A673 (cell line): ENCODE measurements at regions of chr15 and their contacts with region 1.

Region 1: DNA sequence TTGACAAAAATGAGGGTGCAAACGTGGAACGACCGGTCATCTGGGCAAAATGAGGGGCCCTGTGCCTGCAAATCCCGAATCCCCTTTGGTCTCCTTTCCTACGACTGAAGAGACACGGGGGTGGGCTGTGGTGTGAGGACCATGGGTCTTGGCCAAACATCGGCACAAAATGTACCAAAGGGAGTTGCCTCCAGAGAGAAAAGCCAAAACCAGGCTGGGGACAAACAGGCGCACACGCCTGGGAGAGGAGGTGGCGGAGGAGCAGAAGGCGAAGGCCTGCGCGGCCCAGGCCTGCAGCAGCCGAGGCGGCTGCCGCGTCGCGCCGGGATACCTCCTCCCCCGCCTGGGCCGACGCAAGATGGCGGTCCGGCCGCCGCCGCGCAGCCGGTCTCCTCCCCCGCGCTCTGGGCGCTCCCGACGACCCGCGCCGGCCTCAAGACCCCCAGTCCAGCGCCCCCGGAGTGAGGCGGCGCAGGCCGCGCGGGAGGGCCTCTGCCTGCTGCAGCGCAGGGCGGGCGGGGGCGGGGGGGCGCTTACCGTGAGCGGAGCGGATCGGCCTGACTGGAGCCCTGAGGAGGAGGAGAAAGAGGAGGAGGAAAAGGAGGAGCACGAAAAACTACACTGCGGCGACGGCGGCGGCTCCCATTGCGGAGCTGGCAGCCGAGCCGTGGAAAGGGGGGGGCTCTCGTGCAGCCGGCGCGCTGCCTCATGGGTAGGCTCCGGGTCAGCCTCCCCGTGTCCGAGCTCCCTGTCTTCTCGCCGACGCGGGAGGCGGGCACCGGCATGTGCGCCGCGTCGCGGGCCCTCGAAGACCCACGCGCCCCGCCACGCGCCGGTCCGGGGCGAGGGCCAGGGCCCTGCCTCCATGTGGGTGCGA is at the start of gene ZNF280D:
- DNase-seq: peak; percentile 94
- H3K4me3 ChIP-seq: peak within 1 kb of the TSS; percentile 59
- H3K27ac ChIP-seq: peak within 1 kb of the TSS; percentile 94
- H3K4me1 ChIP-seq: peaks cover 37% of the 10 kb centered on the region
- H3K27me3 ChIP-seq: no peaks in the 10 kb centered on the region
- CTCF ChIP-seq: no peak
- total RNA-seq, gene ZNF280D: 42.9 and 44.1 TPM in 2 replicates

Region 2: DNA sequence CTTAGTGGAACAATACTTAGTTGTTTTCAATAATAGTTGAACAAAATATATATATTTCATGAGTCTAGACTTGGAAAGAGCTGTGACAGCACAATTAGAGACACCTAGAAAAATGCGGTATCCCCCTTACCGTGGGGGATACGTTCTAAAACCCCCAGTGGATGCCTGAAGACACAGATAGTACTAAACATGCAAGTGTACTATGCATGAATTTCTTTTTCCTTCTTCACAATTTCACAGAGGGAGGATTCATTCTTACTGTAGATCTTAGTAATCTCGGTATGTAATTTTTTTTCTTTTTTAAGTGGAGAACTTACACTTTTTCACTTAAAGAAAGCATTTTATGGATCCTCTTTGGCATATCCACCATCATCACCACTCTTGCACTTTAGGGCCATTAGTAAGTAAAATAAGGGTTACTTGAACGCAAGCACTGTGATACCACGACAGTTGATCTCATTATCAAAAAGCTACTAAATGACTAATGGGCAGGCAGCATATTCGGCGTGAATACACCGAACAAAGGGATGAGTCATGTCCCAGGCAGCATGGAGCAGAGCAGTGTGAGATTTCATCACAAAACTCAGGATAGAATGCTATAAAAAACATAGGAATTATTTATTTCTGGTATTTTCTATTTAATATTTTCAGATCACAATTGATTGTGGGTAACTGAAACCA is 72.4 kb after region 1 on chr15:
- CTCF ChIA-PET with region 1: no interaction called
- POLR2A ChIA-PET with region 1: no interaction called
- intact Hi-C with region 1: loop called (anchors 5 kb)
- DNase-seq: peak; percentile 90
- H3K4me3 ChIP-seq: peak overlapping the region; percentile 18
- H3K27ac ChIP-seq: peak overlapping the region; percentile 19
- H3K4me1 ChIP-seq: peaks cover 19% of the 10 kb centered on the region
- H3K27me3 ChIP-seq: no peaks in the 10 kb centered on the region
- CTCF ChIP-seq: no peak

Region 3: DNA sequence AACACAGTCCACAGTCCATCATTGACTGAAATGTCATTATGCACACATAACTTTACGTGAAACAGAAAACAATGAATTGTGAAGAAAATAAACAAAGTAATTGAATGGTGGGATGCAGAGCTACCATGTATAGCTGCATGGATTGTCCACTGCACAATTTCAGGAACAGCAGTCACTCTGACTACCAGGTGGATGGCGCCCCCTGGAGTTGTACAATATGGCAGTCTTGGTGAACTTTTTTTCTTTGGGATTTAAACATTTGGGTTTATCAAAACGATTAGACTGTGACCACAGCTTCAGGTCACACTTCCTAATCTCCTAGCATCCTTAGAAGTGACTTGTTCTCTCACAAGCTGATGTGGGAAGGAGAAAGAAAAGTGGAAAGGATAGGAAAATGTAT is 136.4 kb after region 1 on chr15:
- CTCF ChIA-PET with region 1: no interaction called
- POLR2A ChIA-PET with region 1: no interaction called
- intact Hi-C with region 1: loop called (anchors 10 kb)
- DNase-seq: peak; percentile 73
- H3K4me3 ChIP-seq: no peak overlapping the region
- H3K27ac ChIP-seq: no peak overlapping the region
- H3K4me1 ChIP-seq: peaks cover 39% of the 10 kb centered on the region
- H3K27me3 ChIP-seq: no peaks in the 10 kb centered on the region
- CTCF ChIP-seq: peak; percentile 85